Common myeloid progenitor, CD34-positive (primary cell): ENCODE measurements at regions of chr3 and their contacts with region 1.

Region 1: GRCh38 chr3:184005941-184006507 is 11.7 kb downstream of the ABCC5 start:
- DNase-seq: peak; percentile 76 to 95 (median 90)
- H3K4me3 ChIP-seq: peak overlapping the region in 4 of 7 experiments; percentile 22 to 67 (median 52)
- H3K27ac ChIP-seq: peak overlapping the region in 1 of 2 experiments; percentile 6
- H3K4me1 ChIP-seq: peaks cover 8 to 20% (median 15%) of the 10 kb centered on the region in 4 experiments
- H3K27me3 ChIP-seq: no peaks in the 10 kb centered on the region

Region 2: GRCh38 chr3:183635431-183636220 is 370.4 kb before region 1 on chr3 and contains the start of gene KLHL24:
- CTCF ChIA-PET with region 1: no interaction called
- POLR2A ChIA-PET with region 1: no interaction called
- DNase-seq: peak; percentile 90 to 94 (median 91)
- H3K4me3 ChIP-seq: peak within 1 kb of the TSS; percentile 76 to 96 (median 92)
- H3K27ac ChIP-seq: peak within 1 kb of the TSS; percentile 88 to 93
- H3K4me1 ChIP-seq: peaks cover 15 to 23% (median 20%) of the 10 kb centered on the region in 4 experiments
- H3K27me3 ChIP-seq: no peaks in the 10 kb centered on the region

Region 3: DNA sequence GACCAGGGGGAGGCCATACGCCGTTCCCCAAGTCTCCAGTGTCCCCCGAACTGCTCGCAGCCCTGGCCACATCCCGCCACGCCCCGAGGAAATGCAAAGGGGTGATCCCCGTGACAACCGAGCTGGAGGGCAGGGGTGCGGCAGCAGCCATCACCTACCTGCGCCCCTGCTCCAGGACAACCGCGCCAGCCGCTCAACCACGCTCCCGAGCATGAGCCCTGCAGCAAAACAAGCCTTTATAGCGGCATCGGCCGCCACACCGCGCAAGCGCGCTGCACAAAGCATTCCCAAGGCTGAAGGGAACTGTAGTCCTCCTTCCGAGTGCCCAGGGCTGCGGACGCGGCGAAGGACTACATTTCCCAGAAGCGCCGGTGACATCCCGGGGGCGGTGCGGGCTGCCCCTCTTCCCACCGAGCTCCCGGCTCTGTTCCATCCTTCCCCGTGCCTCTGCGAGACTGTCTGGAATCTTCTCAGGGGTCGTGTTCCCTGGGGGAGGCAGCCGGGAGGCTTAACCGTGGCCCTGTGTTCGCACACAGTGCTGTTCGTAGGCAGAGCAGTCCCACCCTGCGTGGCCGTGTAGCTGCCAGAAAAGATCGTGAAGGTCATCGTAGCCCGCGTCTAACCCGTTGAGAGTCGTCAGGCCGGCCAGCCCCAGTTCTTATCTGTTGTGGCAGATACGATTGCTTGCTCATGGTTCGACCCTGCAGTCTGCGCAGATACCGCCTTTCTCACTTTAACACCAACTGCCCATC is 11.8 kb after region 1 on chr3 and contains the start of gene ABCC5:
- CTCF ChIA-PET with region 1: interaction called, 13 read pairs
- POLR2A ChIA-PET with region 1: interaction called, 3 read pairs
- DNase-seq: peak; percentile 84 to 91 (median 89)
- H3K4me3 ChIP-seq: peak within 1 kb of the TSS; percentile 94 to 99 (median 99)
- H3K27ac ChIP-seq: peak within 1 kb of the TSS; percentile 37 to 83
- H3K4me1 ChIP-seq: peaks cover 4 to 29% (median 28%) of the 10 kb centered on the region in 4 experiments
- H3K27me3 ChIP-seq: peaks cover 0 to 9% (median 0%) of the 10 kb centered on the region in 5 experiments

Region 4: DNA sequence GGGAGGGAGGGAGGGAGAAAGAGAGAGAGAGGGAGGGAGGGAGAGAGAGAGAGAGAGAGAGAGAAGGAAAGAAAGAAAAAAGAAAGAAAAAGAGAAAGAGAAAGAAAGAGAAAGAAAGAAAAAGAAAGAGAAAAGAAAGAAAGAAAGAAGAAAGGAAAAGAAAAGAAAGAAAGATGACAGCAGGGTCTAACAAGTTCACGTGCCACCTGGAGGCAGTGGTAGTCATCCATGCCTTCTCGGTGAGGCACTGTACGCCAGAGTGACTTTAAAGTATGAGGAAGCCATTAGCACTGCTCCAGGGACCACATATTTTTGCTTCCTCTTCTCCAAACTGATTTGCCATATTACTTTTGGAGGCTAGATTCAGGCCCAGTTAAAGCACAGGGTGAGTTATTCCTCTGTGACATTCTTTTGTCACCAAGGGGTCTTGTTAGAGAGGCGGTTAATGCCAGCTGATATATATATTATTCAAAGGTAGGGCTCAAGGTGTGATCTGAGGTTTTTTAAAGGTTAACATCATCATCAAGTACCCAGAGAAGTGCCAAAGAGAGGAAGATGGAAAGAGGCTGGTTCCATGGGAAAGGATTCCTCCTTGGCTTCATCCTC is 25.3 kb after region 1 on chr3 and contains the start of gene HTR3D:
- CTCF ChIA-PET with region 1: no interaction called
- POLR2A ChIA-PET with region 1: no interaction called
- DNase-seq: peak in 2 of 3 donors; percentile 40 to 50
- H3K4me3 ChIP-seq: no peak within 1 kb of the TSS
- H3K27ac ChIP-seq: no peak within 1 kb of the TSS
- H3K4me1 ChIP-seq: no peaks in the 10 kb centered on the region
- H3K27me3 ChIP-seq: peaks cover 0 to 4% (median 0%) of the 10 kb centered on the region in 5 experiments